ENCODE measurements at regions of chr12 and their contacts with region 1.

Region 1: GRCh38 chr12:109093022-109093918 is at the start of gene ALKBH2:
- DNase-seq: peak; percentile 88 to 96 (median 94)
- ATAC-seq: peak; percentile 75 to 86 (median 82)
- H3K4me3 ChIP-seq: peak within 1 kb of the TSS; percentile 26 to 51 (median 43)
- H3K27ac ChIP-seq: peak within 1 kb of the TSS in 1 of 4 donors; percentile 48
- H3K4me1 ChIP-seq: peaks cover 7 to 18% (median 13%) of the 10 kb centered on the region in 3 donors
- H3K27me3 ChIP-seq: no peaks in the 10 kb centered on the region
- CTCF ChIP-seq: peak; percentile 92 to 99 (median 96)
- total RNA-seq, gene ALKBH2: 4.3 to 12.2 (median 6.5) TPM

Region 2: DNA sequence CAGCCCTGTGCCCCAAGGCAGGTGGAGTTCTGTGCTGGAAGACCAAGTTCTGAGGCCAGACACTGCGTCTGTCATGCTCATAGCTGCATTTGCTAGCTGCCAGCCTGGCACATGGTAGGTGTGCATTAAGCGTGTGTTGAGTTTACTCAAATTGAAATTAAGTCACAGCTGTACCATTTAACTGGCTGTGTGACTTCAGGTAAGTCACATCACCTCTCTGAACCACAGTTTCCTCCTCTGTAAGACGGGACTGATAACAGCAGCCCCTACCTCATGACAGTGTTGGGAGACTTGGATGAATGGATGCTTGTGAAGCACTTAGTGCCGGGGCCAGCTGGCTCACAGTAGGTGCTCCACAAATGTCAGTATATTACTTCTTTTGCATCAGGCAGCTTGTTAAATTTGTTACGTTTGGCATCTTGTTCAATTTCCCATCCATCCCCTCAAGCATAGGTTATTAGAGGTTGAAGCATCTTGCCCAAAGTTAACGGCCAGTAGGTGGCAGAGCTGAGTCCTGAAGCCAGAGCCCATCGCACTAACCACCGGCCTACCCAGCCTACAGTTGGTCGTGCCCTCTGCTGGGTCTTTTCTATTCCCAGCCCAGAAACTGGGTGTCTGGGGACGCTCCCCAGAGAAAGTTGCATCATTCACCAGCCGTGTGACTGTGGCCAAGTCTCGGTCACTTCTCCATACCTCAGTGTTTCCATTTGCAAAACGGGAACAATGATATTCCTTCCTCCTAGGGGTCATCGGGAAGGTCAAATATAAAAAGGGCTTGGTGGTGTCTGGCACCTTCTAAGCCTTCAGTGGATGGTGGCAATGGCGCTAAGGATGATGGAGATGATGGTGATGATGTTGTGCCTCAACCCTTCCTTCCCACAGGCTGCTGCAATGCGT is 208.9 kb before region 1 on chr12:
- intact Hi-C with region 1: loop called in 2 of 3 experiments (anchors 5 to 10 kb)
- DNase-seq: peak; percentile 21 to 70 (median 50)
- ATAC-seq: peak; percentile 61 to 90 (median 78)
- H3K4me3 ChIP-seq: no peak overlapping the region
- H3K27ac ChIP-seq: no peak overlapping the region
- H3K4me1 ChIP-seq: no peaks in the 10 kb centered on the region
- H3K27me3 ChIP-seq: no peaks in the 10 kb centered on the region
- CTCF ChIP-seq: peak; percentile 24 to 55 (median 46)

Region 3: GRCh38 chr12:109232731-109233130 is 139.5 kb after region 1 on chr12:
- intact Hi-C with region 1: no loop called
- DNase-seq: no peak
- ATAC-seq: no peak
- H3K4me3 ChIP-seq: no peak overlapping the region
- H3K27ac ChIP-seq: no peak overlapping the region
- H3K4me1 ChIP-seq: no peaks in the 10 kb centered on the region
- H3K27me3 ChIP-seq: no peaks in the 10 kb centered on the region
- CTCF ChIP-seq: no peak